Activated naive CD4-positive, alpha-beta T cell treated with anti-CD3 and anti-CD28 coated beads for 36 hours (primary cell): ENCODE measurements at regions of chr20 and their contacts with region 1.

Region 1: GRCh38 chr20:50460460-50461267 is 49.5 kb upstream of the PTPN1 start:
- DNase-seq: peak; percentile 90
- H3K4me3 Mint-ChIP-seq: no peak overlapping the region
- H3K27ac Mint-ChIP-seq: no peak overlapping the region
- H3K4me1 Mint-ChIP-seq: peaks cover 9% of the 10 kb centered on the region
- H3K27me3 Mint-ChIP-seq: peaks cover 4% of the 10 kb centered on the region

Region 2: DNA sequence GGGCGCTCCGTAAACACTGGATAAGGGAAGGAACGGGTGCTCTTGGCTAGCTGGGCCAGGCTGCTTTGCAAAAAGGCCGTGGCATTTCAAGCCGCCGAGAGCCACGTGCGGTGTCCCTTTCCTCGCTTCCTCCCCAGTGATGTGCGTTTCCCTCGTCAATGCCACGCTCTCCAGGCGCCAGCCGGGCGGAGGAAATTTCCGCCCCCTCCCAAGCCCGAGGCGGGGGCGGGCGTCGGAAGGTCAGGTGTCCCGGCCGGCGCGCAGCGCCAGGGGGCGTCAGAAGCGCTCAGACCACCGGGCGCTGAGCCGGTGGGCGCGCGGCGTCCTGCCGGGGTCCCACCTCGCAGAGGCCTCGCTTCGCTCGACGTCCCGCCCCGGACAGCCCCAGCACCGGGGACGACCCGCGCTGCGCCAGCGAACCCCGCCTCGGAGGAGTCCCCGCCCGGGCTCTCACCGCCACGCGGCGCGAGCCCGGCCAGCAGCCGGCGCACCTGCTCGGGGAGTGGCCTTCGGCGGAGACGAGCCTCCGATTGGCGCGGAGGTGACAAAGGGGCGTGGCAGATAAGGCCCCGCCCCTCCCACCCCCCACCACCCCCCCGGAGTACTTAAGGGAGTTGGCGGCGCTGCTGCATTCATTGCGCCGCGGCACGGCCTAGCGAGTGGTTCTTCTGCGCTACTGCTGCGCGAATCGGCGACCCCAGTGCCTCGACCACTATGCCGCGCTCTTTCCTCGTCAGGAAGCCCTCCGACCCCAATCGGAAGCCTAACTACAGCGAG is 478.1 kb before region 1 on chr20 and contains the start of gene SNAI1:
- CTCF ChIA-PET with region 1: no interaction called
- intact Hi-C with region 1: loop called (anchors 10 kb)
- DNase-seq: peak; percentile 75
- H3K4me3 Mint-ChIP-seq: peak within 1 kb of the TSS; percentile 48
- H3K27ac Mint-ChIP-seq: no peak within 1 kb of the TSS
- H3K4me1 Mint-ChIP-seq: peaks cover 20% of the 10 kb centered on the region
- H3K27me3 Mint-ChIP-seq: peaks cover 3% of the 10 kb centered on the region
- total RNA-seq, gene SNAI1: 0.31 TPM in 1 of 2 experiments, not detected in the other

Region 3: GRCh38 chr20:50179507-50180016 is 281.1 kb before region 1 on chr20:
- CTCF ChIA-PET with region 1: interaction called, 171 read pairs
- intact Hi-C with region 1: no loop called
- DNase-seq: no peak
- H3K4me3 Mint-ChIP-seq: no peak overlapping the region
- H3K27ac Mint-ChIP-seq: no peak overlapping the region
- H3K4me1 Mint-ChIP-seq: no peaks in the 10 kb centered on the region
- H3K27me3 Mint-ChIP-seq: peaks cover 9% of the 10 kb centered on the region

Region 4: DNA sequence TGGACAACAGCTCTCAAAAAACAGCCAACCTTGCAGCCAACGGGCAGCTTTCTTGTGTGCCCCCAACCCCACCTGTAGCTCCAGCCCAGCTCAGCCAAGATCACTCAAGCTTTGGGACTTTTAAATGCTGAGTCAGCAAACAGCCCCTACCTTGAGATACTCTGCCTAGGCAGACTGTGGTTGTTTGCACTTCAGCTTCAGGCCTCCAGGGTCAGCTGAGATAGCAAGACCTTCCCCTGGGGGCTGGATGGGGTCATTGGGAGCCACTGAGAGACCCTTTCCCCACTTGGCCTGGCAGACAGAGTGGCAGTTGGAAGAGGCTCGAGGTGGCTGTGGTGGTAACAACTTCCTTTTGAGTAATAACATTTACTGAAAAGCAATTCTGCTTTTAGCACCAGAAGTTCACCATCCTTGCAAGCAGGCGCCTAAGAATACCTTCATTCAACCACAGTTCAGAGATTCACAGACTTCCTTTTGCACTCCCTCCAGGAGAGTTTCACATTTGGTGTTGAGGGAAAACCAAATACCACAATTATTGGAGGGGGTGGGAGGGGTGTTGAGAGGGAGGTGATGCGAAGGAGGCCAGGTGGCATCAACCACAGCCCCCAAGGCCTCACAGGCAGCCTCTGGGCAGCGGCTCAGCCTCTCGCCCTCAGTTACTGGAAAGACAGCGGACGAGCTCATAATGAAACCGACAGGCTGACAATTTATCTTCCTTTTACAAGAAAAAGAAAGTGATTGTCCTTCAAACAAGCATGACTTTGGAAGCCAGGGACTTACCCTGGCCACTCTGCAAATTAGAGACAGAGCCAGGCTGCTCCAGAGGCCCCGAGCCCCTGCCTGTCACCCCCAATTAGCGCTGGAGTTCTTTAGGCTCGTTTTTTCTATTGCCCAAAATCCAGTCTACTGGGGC is 121.9 kb before region 1 on chr20:
- CTCF ChIA-PET with region 1: interaction called, 5 read pairs
- intact Hi-C with region 1: loop called (anchors 2 kb)
- DNase-seq: peak; percentile 88
- H3K4me3 Mint-ChIP-seq: peak overlapping the region; percentile 53
- H3K27ac Mint-ChIP-seq: peak overlapping the region; percentile 92
- H3K4me1 Mint-ChIP-seq: peaks cover 36% of the 10 kb centered on the region
- H3K27me3 Mint-ChIP-seq: no peaks in the 10 kb centered on the region

Region 5: GRCh38 chr20:50569864-50570836 is 109.5 kb after region 1 on chr20:
- CTCF ChIA-PET with region 1: interaction called, 24 read pairs
- intact Hi-C with region 1: loop called (anchors 1 kb)
- DNase-seq: peak; percentile 83
- H3K4me3 Mint-ChIP-seq: peak overlapping the region; percentile 23
- H3K27ac Mint-ChIP-seq: peak overlapping the region; percentile 91
- H3K4me1 Mint-ChIP-seq: peaks cover 84% of the 10 kb centered on the region
- H3K27me3 Mint-ChIP-seq: no peaks in the 10 kb centered on the region

Region 6: DNA sequence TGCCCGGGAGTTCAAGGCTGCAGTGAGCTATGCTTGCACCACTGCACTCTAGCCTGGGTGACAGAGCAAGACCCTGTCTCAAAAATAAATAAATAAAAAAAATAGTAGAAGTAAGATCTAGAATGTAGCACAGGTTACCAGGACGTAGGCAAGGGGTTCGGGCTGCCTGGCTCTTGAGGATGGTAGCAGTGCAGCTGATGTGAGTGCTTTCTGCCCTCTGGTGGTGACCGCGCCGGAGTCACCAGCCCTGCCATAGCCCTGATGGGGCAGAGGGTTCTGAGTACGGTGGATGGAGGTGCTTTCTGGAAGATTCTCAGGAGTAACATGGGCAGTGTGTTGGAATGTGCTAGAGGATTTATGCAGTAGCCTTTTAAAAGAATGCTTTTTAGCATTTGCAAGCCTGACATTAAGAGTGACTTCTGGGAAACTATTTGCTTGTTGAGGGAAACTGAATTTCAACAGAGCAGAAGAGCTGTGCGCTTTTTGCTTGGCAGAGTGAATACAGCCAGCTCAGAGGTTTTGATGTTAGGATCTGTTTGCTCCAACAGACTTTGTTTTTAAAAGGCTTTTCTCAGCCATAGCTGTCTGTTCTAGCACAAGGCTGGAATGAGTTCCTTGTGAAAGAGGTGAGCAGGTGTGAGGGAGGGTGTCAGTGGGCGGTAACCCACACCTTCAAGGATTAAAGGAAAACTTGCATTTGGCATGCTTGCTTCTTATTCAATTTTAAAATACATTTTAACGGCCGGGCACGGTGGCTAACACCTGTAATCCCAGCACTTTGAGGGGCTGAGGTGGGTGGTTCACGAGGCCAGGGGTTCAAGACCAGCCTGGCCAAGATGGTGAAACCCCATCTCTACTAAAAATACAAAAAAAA is 115.4 kb after region 1 on chr20:
- CTCF ChIA-PET with region 1: interaction called, 24 read pairs
- intact Hi-C with region 1: no loop called
- DNase-seq: peak; percentile 80
- H3K4me3 Mint-ChIP-seq: no peak overlapping the region
- H3K27ac Mint-ChIP-seq: peak overlapping the region; percentile 54
- H3K4me1 Mint-ChIP-seq: peaks cover 41% of the 10 kb centered on the region
- H3K27me3 Mint-ChIP-seq: no peaks in the 10 kb centered on the region